ENCODE measurements at regions of chr15 and their contacts with region 1.

Region 1: GRCh38 chr15:58966698-58967097 is 20.8 kb upstream of the RNF111 start:
- DNase-seq: no peak
- ATAC-seq: no peak
- H3K4me3 ChIP-seq: no peak overlapping the region
- H3K27ac ChIP-seq: no peak overlapping the region
- H3K4me1 ChIP-seq: no peaks in the 10 kb centered on the region
- H3K27me3 ChIP-seq: no peaks in the 10 kb centered on the region
- CTCF ChIP-seq: no peak

Region 2: DNA sequence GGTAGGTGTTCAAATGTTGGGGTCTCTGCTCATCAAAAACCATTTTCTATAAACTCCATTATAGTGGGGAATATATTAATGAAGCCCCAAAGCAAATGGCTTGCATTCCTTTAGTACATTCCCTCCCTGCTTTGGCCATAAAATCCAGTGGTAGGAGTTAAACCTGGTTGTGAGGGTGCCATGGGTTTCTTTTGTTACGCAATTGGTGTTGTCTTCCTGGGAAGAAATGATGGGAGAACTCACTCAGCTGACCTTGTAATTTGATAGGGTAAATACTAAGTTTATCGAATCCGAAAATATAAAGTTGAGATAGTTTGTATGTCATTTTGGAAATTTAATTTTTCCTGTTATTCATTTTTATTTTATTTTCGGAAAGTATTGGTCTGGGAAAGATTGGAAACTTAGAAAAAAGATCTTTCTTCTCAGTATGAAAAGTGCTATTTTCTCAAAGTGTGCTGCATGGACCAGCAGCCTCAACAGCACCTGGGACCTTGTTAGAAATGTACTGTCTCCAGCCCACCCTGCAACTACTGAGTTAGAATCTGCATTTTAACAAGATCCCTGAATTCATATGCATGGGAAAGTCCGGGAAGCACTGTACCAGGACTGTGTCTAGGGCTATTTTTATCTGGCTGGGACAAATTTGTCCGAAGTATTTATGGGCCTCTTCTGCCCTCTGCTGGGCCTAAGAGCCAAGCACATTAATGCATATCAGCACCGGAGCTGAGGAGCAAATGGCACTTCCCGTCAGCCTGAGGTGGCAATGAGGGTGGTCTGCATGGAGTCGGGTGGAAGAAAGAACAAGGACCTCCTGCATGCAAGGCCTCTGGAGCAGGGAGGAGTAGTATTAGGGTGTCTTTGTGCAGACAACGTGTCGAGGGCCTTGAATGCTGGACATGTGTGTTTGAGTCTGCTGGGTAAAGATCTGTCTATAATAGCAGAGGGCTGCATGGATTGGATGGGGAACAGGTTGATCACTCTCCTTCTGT is 526.0 kb after region 1 on chr15:
- intact Hi-C with region 1: loop called (anchors 10 kb)
- DNase-seq: no peak
- ATAC-seq: peak; percentile 98
- H3K4me3 ChIP-seq: no peak overlapping the region
- H3K27ac ChIP-seq: no peak overlapping the region
- H3K4me1 ChIP-seq: no peaks in the 10 kb centered on the region
- H3K27me3 ChIP-seq: no peaks in the 10 kb centered on the region
- CTCF ChIP-seq: peak; percentile 89